Motor neuron (in vitro differentiated cells): ENCODE measurements at regions of chr6 and their contacts with region 1.

Region 1: DNA sequence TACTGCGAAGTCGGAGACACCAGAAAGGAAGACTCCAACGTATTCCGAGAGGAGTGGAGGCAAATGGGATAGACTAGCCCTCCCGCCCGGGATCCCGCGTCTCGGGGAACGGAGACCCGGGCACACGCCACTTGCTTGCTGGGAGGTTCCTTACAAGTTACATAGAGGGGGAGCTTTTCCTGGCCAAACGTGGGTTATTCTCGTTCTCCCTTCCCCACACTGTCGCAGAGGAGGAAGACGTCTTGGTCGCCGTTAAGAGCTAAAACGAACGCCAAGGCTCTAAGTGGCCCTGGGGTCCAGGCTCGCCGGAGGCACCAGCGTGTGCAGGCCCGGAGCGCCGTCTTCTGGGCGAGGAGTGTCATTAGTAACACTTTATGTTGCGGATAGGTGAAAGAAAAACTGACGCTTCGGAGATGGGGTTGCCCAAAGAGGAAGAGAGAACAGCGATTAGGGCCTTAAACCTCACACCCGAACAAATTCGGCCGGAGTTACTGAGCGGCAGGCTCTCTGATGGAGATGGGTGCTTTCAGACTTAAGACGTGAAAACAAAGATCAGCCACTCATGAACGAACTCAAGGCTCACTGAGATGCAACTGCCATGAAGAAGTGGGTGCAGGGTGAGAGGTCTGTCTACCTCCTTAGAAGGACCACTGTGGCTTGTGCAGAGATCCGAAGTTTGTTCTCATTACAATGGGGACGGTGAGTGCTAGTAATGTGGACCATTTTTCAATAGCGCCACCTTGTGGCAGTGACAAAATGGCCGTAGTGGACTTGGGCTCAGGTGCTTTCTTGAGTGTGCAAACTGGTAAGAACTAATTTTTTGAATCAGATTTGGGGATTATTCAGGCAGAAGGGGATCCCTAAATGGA is 11.7 kb upstream of the ZNF311 start:
- ATAC-seq: peak; percentile 91 to 97 (median 95)
- H3K4me3 ChIP-seq: peak overlapping the region; percentile 35 to 60 (median 41)
- H3K27ac ChIP-seq: no peak overlapping the region
- H3K4me1 ChIP-seq: no peaks in the 10 kb centered on the region

Region 2: DNA sequence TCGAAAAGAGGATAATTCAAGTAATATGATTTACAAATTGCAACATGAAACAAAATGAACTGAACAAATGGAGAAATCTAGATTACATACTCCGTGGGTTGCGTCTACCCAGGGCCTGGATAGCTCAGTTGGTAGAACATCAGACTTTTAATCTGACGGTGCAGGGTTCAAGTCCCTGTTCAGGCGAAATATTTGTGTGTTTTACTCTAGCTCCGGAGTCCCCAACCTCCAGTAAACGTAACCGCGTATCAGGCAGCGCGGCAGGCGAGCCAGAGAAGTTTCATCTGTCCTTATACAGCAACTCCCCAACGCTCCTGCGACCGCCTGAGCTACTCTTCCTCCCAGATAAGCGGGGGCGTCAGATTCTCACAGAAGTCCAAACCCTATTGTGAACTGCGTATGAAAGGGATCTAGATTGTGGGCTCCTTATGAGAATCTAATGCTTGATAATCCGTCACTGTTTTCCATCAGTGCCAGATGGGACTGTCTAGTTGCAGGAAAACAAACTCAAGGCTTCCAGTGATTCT is 269.1 kb before region 1 on chr6:
- in situ Hi-C with region 1: no loop called
- ATAC-seq: peak in 6 of 8 experiments; percentile 41 to 95 (median 63)
- H3K4me3 ChIP-seq: no peak overlapping the region
- H3K27ac ChIP-seq: no peak overlapping the region
- H3K4me1 ChIP-seq: no peaks in the 10 kb centered on the region

Region 3: DNA sequence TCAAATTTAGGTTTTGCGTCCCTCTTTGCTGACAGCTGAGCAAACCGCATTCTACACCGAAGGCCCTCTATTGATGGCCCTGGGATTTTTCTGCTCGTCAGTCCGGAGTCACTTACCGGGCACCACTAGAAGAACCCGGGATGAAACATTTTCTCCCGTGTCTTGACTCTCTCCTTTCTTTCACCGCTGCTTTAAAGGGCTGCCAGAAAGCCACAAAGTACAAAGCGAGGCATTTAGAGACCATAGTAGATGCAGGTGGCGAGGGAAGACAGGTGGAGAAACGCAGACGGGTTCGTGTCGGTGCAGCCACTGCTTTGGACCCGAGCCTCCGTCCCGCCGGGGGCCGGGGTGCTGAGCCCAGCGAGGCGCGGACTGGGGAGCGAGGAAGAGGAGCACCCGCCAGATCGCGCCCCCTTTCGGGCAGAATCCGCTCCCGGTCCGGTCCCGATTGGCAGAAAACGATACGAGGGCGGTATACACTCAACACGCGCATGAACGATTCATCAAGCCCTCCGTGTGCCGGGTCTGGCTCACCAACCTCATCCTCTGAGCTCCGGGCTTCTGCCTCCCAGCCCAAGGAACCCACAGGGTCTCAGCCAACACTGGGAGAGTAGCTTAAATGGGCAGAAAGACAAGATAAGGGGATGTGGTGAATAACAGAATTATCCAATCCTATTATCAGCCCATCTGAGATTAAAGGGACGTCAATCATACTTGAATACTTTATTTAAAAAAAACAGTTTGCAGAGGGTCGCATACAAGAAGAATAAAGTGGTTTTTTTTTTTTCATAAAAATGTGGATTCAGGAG is 178.0 kb before region 1 on chr6:
- in situ Hi-C with region 1: loop called in 1 of 9 experiments (anchors 25 kb)
- ATAC-seq: peak; percentile 88 to 94 (median 90)
- H3K4me3 ChIP-seq: peak overlapping the region; percentile 57 to 85 (median 69)
- H3K27ac ChIP-seq: peak overlapping the region; percentile 30 to 46
- H3K4me1 ChIP-seq: peaks cover 0 to 5% of the 10 kb centered on the region in 2 donors